ENCODE measurements at regions of chr6 and their contacts with region 1.

Region 1: GRCh38 chr6:157021344-157021992 is 244.3 kb downstream of the ARID1B start:
- DNase-seq: peak; percentile 90
- H3K4me3 Mint-ChIP-seq: peak overlapping the region; percentile 92
- H3K27ac Mint-ChIP-seq: peak overlapping the region; percentile 99
- H3K4me1 Mint-ChIP-seq: peaks cover 64% of the 10 kb centered on the region
- H3K27me3 Mint-ChIP-seq: no peaks in the 10 kb centered on the region

Region 2: GRCh38 chr6:156068881-156069280 is 952.6 kb before region 1 on chr6:
- CTCF ChIA-PET with region 1: no interaction called
- intact Hi-C with region 1: loop called (anchors 10 kb)
- DNase-seq: no peak
- H3K4me3 Mint-ChIP-seq: no peak overlapping the region
- H3K27ac Mint-ChIP-seq: no peak overlapping the region
- H3K4me1 Mint-ChIP-seq: no peaks in the 10 kb centered on the region
- H3K27me3 Mint-ChIP-seq: no peaks in the 10 kb centered on the region

Region 3: DNA sequence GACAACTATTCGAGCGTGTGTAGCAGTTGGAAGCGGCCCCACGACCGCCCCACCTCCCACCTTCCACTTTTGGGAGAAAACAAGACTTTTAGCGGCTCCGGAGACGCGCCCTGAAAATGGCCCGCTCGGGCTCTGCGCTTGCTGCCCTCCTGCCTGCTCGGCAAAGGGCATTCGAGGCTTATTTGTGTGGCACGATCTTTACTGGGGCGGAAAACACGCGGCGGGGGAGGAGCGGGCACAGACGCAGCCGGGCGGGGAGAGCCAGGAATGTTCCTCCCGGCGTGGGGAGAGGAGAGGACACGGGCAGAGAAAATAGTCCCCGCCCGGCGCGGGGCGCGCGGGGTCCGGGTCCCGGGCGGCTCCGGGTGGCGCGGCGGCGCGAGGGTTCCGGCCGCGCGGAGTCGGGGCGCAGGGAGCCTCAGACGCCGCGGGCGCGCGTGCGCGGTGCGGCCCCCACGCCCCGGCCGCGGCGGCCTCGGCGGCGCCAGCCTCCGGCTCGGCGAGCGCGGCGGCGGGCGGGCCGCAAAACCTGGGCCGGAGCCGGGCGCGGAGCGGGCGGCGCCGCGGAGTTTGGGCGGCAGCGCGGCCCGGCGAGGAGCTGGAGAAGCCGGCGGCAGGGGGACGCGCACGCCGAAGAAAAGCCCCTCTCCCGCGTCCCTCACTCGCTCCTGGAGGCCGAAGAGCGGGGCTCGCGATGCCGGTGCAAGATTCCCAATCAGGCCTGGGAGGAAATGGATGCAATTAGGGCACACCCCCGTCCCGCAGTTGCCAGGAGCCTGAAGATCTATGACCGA is 334.3 kb before region 1 on chr6:
- CTCF ChIA-PET with region 1: no interaction called
- intact Hi-C with region 1: loop called (anchors 2 kb)
- DNase-seq: peak; percentile 63
- H3K4me3 Mint-ChIP-seq: peak overlapping the region; percentile 82
- H3K27ac Mint-ChIP-seq: peak overlapping the region; percentile 91
- H3K4me1 Mint-ChIP-seq: peaks cover 32% of the 10 kb centered on the region
- H3K27me3 Mint-ChIP-seq: no peaks in the 10 kb centered on the region

Region 4: DNA sequence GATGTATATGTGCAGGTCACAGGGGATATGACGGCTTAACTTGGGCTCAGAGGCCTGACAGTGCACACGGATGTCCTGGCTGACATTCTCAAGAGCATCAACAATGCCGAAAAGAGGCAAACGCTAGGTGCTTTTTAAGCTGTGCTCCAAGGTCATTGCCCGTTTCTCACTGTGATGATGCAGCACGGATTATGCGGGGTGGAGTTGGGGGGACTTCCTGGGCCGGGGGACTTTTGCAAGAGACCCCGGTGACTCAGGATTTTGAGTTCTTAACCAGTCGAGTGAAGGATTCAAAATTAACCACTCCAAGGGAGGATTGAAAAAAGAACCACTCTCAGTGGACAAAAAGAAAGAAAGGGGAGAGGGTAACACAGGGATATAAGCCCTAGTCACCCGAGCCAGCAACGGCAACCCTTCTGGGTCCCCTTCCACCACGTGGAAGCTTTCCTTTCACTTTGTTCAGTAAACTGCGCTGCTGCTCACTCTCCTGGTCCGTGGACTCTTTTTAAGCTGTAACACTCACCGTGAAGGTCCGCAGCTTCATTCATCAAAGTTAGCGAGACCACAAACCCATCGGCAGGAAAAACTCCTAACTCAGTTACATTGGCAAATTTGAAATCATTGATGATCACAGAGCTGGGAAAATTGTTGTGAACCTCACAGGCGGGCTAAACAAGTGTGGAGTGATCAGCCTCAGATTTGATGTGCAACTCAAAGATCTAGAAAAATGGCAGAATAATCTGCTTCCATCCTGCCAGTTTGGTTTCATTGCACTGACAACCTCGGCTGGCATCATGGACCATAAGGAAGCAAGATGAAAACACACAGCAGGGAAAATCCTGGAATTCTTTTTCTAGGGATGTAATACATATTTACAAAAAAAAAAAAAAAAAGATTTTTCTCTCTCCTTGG is 45.0 kb before region 1 on chr6:
- CTCF ChIA-PET with region 1: no interaction called
- intact Hi-C with region 1: loop called (anchors 2 kb)
- DNase-seq: peak; percentile 48
- H3K4me3 Mint-ChIP-seq: peak overlapping the region; percentile 67
- H3K27ac Mint-ChIP-seq: peak overlapping the region; percentile 63
- H3K4me1 Mint-ChIP-seq: peaks cover 78% of the 10 kb centered on the region
- H3K27me3 Mint-ChIP-seq: no peaks in the 10 kb centered on the region

Region 5: DNA sequence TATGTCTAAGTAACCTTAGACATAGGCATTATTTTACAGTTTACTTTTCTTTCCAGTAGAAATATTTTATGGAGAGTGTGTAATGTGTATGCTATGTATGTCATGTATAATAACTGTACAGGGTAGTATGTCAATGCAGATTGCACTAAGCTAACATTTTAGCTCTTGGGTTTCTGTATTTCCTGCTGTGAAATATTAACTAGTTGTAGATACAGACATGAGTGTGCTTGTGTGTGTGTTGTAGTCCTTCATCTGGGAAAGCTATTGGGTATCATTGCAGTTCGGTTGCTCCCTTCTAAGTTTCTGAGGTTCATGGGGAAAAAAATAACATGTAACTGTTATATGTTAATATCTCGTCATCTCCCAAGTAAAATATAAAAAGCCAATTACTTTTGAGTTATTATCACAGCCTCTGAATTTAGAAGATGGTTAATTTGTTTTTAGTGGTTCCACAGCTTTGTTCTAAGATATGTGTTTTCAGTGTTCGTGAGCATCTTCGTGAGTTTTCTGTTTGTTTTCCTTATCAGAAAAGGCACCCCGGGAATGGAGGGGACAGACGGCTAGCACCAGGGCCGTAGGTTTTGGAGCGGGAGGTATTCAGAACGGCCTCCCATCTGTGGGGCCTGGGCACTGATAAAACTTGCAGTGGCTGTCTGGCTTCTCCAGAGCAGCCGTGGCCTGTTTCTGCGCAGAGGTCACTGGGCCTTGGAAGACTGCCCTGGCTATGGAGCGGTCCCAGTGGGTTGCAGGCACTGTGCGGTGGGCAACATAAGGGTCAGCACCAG is 29.3 kb before region 1 on chr6:
- CTCF ChIA-PET with region 1: no interaction called
- intact Hi-C with region 1: no loop called
- DNase-seq: no peak
- H3K4me3 Mint-ChIP-seq: no peak overlapping the region
- H3K27ac Mint-ChIP-seq: no peak overlapping the region
- H3K4me1 Mint-ChIP-seq: peaks cover 41% of the 10 kb centered on the region
- H3K27me3 Mint-ChIP-seq: no peaks in the 10 kb centered on the region

Region 6: DNA sequence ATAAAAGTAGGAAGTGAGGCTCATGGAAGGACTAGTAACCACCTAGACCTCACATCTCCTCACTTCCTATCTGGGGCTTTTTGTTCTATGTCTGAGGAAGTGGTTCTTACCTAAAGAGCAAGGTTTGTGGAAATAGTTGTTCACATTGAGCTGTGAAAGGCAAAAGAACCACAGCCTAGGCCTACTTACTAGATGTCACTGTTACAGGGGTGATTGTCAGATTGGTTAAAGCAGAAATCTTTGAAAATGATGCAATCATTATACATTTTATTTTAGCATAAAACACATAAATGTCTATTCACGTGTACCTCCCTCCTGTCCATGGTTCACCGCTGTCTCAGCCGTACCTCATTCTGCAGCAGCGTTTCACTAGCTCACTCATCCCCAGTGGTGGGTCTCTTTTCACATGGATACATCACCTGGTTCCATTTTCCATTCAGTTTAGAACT is 33.1 kb after region 1 on chr6:
- CTCF ChIA-PET with region 1: interaction called, 3 read pairs
- intact Hi-C with region 1: loop called (anchors 1 kb)
- DNase-seq: peak; percentile 67
- H3K4me3 Mint-ChIP-seq: peak overlapping the region; percentile 29
- H3K27ac Mint-ChIP-seq: peak overlapping the region; percentile 94
- H3K4me1 Mint-ChIP-seq: peaks cover 43% of the 10 kb centered on the region
- H3K27me3 Mint-ChIP-seq: no peaks in the 10 kb centered on the region

Region 7: DNA sequence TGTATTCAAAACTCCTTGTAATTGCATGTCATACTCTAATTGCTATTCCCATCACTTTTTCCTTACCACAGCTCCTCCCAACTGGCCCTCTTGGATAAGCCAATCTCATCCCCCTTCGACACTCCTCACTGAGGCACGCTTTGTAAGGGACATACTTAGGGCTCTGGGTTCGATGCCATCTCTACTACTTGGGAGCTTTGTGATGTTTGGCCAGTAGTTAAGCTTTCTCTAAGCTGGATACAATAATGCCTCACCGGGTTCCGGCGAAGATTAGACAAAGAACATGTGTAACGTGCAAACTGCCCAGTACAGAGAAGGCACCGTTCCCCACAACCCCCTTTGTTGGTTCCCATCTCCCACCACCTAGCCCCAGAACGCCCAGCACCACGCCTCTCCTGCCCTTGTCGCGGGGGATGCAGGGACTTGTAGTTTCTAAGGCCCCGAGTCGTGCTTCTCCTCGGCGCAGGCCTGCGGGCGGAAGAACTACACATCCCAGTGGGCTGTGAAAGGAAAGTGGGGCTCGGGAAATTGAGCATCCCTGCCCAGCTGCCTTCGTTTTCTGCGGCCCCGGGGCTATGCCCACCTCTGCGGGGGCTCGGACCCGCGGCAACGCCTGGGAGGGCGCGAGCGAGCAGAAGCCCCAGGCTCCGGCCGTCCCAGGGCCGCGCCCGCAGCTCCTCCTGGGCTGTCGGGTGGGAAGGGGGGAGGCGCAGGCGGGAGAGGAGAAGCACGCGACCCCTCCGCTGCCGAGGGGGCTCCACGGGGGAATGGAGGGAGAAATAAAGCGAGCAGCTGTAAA is 358.4 kb after region 1 on chr6:
- CTCF ChIA-PET with region 1: no interaction called
- intact Hi-C with region 1: loop called (anchors 5 kb)
- DNase-seq: peak; percentile 92
- H3K4me3 Mint-ChIP-seq: peak overlapping the region; percentile 81
- H3K27ac Mint-ChIP-seq: peak overlapping the region; percentile 59
- H3K4me1 Mint-ChIP-seq: peaks cover 36% of the 10 kb centered on the region
- H3K27me3 Mint-ChIP-seq: peaks cover 12% of the 10 kb centered on the region